Activated B cell treated with CpG ODN at 0.5 μM for 24 hours (primary cell): ENCODE measurements at regions of chr2 and their contacts with region 1.

Region 1: GRCh38 chr2:58448065-58448507 is 207.0 kb upstream of the FANCL start:
- DNase-seq: no peak
- ATAC-seq: no peak
- H3K4me3 Mint-ChIP-seq: no peak overlapping the region
- H3K27ac Mint-ChIP-seq: no peak overlapping the region
- H3K4me1 Mint-ChIP-seq: peaks cover 3% of the 10 kb centered on the region
- H3K27me3 Mint-ChIP-seq: no peaks in the 10 kb centered on the region
- CTCF ChIP-seq: no peak

Region 2: DNA sequence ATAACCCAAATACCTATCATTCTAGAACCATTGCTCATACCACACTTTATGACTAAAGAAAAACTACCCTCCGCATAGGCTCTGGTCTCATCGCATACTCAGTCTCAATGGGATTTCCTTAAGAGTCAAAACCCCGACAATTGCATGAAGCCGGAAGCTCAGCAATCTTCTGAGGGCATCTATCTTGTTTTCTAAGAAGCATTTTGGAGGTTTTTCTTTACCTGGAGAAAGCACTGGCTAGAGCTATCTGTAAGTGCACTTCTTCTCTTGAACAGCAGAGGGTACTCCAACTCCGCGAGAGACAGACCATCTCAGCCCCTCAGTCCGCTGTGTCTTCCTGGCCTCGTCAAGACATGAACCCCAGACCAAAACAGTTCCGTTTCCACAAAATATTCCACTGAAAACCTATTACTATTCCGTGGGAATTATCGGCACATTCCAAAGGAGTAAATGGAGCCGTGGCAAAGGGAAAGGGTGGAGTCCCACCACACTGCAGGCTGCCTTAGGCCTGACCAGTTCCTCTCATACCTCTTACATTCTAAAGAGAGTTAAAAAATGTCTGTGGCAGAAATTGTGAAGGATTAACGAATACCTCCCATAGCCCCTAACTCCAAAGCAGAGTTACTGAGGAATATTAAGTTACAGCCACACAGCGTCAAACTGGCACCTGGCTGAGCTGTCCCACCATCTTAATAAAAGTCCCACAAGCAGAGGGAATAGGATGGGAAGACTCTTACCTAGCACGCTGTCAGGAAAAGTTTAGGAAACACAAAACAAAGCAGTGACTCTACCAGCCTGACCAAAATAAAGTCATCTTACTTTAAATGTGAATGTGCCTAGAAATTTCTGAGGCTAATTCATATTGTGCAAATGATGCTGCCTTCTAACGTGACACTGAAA is 727.1 kb before region 1 on chr2:
- CTCF ChIA-PET with region 1: no interaction called
- POLR2A ChIA-PET with region 1: no interaction called
- intact Hi-C with region 1: loop called (anchors 1 kb)
- DNase-seq: peak; percentile 16
- ATAC-seq: peak; percentile 86
- H3K4me3 Mint-ChIP-seq: peak overlapping the region; percentile 44
- H3K27ac Mint-ChIP-seq: no peak overlapping the region
- H3K4me1 Mint-ChIP-seq: peaks cover 5% of the 10 kb centered on the region
- H3K27me3 Mint-ChIP-seq: no peaks in the 10 kb centered on the region
- CTCF ChIP-seq: peak; percentile 53

Region 3: GRCh38 chr2:58350484-58350883 is 97.6 kb before region 1 on chr2:
- CTCF ChIA-PET with region 1: no interaction called
- POLR2A ChIA-PET with region 1: no interaction called
- intact Hi-C with region 1: no loop called
- DNase-seq: no peak
- ATAC-seq: no peak
- H3K4me3 Mint-ChIP-seq: no peak overlapping the region
- H3K27ac Mint-ChIP-seq: no peak overlapping the region
- H3K4me1 Mint-ChIP-seq: no peaks in the 10 kb centered on the region
- H3K27me3 Mint-ChIP-seq: no peaks in the 10 kb centered on the region
- CTCF ChIP-seq: no peak

Region 4: GRCh38 chr2:58649756-58650155 is 201.7 kb after region 1 on chr2:
- CTCF ChIA-PET with region 1: no interaction called
- POLR2A ChIA-PET with region 1: no interaction called
- intact Hi-C with region 1: no loop called
- DNase-seq: no peak
- ATAC-seq: no peak
- H3K4me3 Mint-ChIP-seq: no peak overlapping the region
- H3K27ac Mint-ChIP-seq: no peak overlapping the region
- H3K4me1 Mint-ChIP-seq: peaks cover 7% of the 10 kb centered on the region
- H3K27me3 Mint-ChIP-seq: peaks cover 3% of the 10 kb centered on the region
- CTCF ChIP-seq: no peak